CD4-positive, alpha-beta memory T cell (primary cell): ENCODE measurements at regions of chr3 and their contacts with region 1.

Region 1: DNA sequence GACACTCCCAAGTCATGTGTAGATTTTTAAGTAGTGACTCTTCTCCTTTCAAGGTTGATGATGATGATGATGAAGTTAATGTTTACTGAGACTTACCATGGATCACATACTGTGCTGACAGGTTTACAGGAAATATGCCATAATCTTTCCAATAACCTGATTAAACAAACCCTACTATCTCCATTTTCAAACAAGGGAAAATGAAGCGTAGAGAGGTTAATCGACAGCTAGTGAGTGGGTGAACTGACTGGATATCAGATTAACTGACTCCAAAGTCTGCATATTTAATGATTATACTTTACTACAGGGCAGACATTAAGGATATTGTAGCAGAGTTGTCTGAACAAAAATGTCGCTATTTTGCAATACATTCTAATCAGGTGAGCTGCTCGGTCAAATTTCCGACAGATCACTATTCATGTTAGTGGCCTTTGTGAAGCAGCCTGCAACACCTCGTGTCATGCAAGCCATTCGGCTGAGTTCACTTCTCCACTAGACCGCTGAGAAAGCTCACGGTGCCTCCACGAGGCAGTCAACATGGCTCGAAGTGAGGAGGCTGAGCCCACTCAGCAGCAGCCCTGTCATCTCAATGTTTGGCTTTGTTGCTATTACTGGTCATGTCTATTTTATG is 264.2 kb downstream of the NFKBIZ start:
- DNase-seq: no peak
- H3K4me3 ChIP-seq: no peak overlapping the region
- H3K4me3 Mint-ChIP-seq: peak overlapping the region in 2 of 8 donors; percentile 13 to 68
- H3K27ac ChIP-seq: peak overlapping the region; percentile 29
- H3K27ac Mint-ChIP-seq: peak overlapping the region; percentile 55 to 91 (median 88)
- H3K4me1 ChIP-seq: peaks cover 23% of the 10 kb centered on the region
- H3K4me1 Mint-ChIP-seq: peaks cover 19 to 39% (median 24%) of the 10 kb centered on the region in 4 donors
- H3K27me3 ChIP-seq: no peaks in the 10 kb centered on the region
- H3K27me3 Mint-ChIP-seq: no peaks in the 10 kb centered on the region

Region 2: GRCh38 chr3:100277255-100277800 is 1836.2 kb before region 1 on chr3:
- CTCF ChIA-PET with region 1: no interaction called
- POLR2A ChIA-PET with region 1: no interaction called
- intact Hi-C with region 1: no loop called
- DNase-seq: no peak
- H3K4me3 ChIP-seq: no peak overlapping the region
- H3K4me3 Mint-ChIP-seq: no peak overlapping the region
- H3K27ac ChIP-seq: no peak overlapping the region
- H3K27ac Mint-ChIP-seq: no peak overlapping the region
- H3K4me1 ChIP-seq: no peaks in the 10 kb centered on the region
- H3K4me1 Mint-ChIP-seq: peaks cover 21 to 36% (median 23%) of the 10 kb centered on the region in 4 donors
- H3K27me3 ChIP-seq: no peaks in the 10 kb centered on the region
- H3K27me3 Mint-ChIP-seq: no peaks in the 10 kb centered on the region

Region 3: DNA sequence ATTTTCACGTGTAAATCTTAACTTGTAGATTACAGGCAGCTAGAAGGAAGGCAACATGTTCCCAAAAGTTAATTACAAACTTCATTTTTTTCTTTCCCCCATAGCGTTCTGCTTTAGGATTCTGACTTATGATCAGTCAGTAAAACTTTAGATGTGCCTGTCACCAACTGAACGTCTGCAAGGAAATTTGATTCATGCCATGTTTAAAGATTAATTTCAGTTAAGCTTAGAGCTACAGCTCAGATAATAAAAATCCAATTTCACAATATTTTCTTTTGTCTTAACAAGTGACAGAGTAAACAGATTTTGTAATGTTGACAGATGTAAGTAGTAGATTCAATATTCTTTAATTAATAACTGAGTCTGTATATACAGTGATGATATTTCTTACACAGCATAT is 11.1 kb before region 1 on chr3:
- CTCF ChIA-PET with region 1: interaction called, 3 read pairs
- POLR2A ChIA-PET with region 1: no interaction called
- intact Hi-C with region 1: loop called (anchors 2 kb)
- DNase-seq: no peak
- H3K4me3 ChIP-seq: no peak overlapping the region
- H3K4me3 Mint-ChIP-seq: no peak overlapping the region
- H3K27ac ChIP-seq: no peak overlapping the region
- H3K27ac Mint-ChIP-seq: no peak overlapping the region
- H3K4me1 ChIP-seq: peaks cover 5% of the 10 kb centered on the region
- H3K4me1 Mint-ChIP-seq: peaks cover 0 to 11% (median 4%) of the 10 kb centered on the region in 4 donors
- H3K27me3 ChIP-seq: no peaks in the 10 kb centered on the region
- H3K27me3 Mint-ChIP-seq: peaks cover 0 to 4% of the 10 kb centered on the region in 2 donors

Region 4: GRCh38 chr3:102290241-102290640 is 176.7 kb after region 1 on chr3:
- CTCF ChIA-PET with region 1: no interaction called
- POLR2A ChIA-PET with region 1: no interaction called
- intact Hi-C with region 1: no loop called
- DNase-seq: no peak
- H3K4me3 ChIP-seq: no peak overlapping the region
- H3K4me3 Mint-ChIP-seq: no peak overlapping the region
- H3K27ac ChIP-seq: no peak overlapping the region
- H3K27ac Mint-ChIP-seq: no peak overlapping the region
- H3K4me1 ChIP-seq: no peaks in the 10 kb centered on the region
- H3K4me1 Mint-ChIP-seq: no peaks in the 10 kb centered on the region
- H3K27me3 ChIP-seq: no peaks in the 10 kb centered on the region
- H3K27me3 Mint-ChIP-seq: peaks cover 14 to 16% of the 10 kb centered on the region in 2 donors